ENCODE measurements at regions of chr20 and their contacts with region 1.

Region 1: DNA sequence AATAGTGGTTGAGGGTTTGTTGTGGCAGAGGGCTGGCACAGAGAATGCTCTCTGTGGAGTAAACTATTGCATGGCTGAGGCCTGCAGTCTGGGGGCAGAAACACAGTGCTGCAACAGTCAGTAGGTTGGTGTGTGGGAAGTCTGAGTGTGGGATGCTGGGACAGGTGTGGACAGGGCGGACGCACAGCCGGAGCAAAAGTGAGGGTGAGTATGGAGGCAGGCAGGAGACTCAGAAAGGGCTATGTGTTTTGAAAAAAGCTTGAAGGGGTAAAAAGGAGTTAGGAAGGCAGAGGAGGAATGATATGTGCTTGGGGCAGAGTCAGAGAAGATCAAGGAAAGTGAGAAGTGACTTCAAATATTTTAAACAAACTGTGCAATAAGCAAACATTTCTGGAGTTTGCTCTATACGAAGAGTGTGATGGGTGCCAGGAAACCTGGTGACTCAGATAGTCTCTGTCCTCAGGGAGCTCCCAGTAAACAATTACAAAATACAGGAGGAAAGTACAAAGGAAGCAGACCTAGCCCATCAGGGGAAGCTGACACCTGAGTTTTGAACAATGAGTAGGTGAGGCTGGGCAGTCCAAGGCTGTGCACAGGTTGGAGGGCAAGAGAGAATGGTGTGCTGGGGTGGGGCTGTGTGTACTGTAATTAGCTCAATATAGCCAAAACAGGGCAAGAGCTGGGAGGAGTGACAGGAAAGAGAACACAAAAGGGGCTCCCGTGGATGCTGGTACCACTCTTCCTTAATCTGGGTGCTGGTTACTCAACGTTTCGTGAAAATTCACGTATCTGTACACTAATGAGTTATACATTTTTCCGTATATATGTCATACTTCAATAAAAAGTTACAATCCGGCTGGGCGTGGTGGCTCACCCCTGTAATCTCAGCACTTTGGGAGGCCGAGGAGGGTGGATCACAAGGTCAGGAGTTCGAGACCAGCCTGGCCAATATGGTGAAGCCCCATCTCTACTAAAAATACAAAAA is 55.2 kb downstream of the PIGU start:
- DNase-seq: peak; percentile 65 to 74
- H3K4me3 ChIP-seq: no peak overlapping the region
- H3K4me3 Mint-ChIP-seq: no peak overlapping the region
- H3K27ac Mint-ChIP-seq: peak overlapping the region; percentile 3
- H3K4me1 ChIP-seq: peaks cover 12% of the 10 kb centered on the region
- H3K4me1 Mint-ChIP-seq: peaks cover 12% of the 10 kb centered on the region
- H3K27me3 ChIP-seq: no peaks in the 10 kb centered on the region
- H3K27me3 Mint-ChIP-seq: no peaks in the 10 kb centered on the region
- CTCF ChIP-seq: no peak

Region 2: GRCh38 chr20:34558320-34559218 is 63.1 kb before region 1 on chr20 and contains the start of gene MAP1LC3A:
- CTCF ChIA-PET with region 1: no interaction called
- POLR2A ChIA-PET with region 1: no interaction called
- intact Hi-C with region 1: no loop called
- DNase-seq: no peak
- H3K4me3 ChIP-seq: no peak within 1 kb of the TSS
- H3K4me3 Mint-ChIP-seq: no peak within 1 kb of the TSS
- H3K27ac Mint-ChIP-seq: no peak within 1 kb of the TSS
- H3K4me1 ChIP-seq: no peaks in the 10 kb centered on the region
- H3K4me1 Mint-ChIP-seq: no peaks in the 10 kb centered on the region
- H3K27me3 ChIP-seq: no peaks in the 10 kb centered on the region
- H3K27me3 Mint-ChIP-seq: no peaks in the 10 kb centered on the region
- CTCF ChIP-seq: no peak
- total RNA-seq, gene MAP1LC3A: 0.88 and 0.95 TPM in 2 replicates

Region 3: DNA sequence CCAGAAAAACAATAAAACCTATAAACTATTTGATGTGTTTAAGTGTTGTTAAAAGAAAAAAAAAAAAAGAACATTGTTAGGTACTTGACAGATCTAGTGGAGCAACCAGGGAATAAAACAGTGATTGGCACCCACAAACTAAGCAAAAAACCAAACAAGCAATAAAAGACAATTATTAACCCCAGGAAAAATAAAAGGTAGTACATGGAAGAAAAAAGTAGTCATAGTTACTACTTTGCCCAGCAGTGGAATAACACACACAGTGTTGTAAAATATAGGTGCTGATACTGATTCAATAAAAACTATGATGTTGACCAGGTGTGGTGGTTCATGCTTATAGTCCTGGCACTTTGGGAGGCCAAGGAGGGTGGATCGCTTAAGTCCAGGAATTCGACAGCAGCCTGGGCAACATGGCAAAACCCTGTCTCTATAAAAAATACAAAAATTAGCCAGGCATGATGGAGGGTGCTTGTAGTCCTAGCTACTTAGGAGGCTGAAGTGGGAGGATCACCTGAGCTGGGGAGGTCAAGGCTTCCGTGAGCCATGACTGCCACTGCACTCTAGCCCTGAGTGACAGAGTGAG is 11.3 kb after region 1 on chr20:
- CTCF ChIA-PET with region 1: no interaction called
- POLR2A ChIA-PET with region 1: no interaction called
- intact Hi-C with region 1: loop called (anchors 1 kb)
- DNase-seq: peak in 1 of 2 experiments; percentile 30
- H3K4me3 ChIP-seq: no peak overlapping the region
- H3K4me3 Mint-ChIP-seq: no peak overlapping the region
- H3K27ac Mint-ChIP-seq: peak overlapping the region; percentile 61
- H3K4me1 ChIP-seq: peaks cover 24% of the 10 kb centered on the region
- H3K4me1 Mint-ChIP-seq: peaks cover 28% of the 10 kb centered on the region
- H3K27me3 ChIP-seq: no peaks in the 10 kb centered on the region
- H3K27me3 Mint-ChIP-seq: no peaks in the 10 kb centered on the region
- CTCF ChIP-seq: no peak

Measured in Caco-2 (cell line).